Activated CD4-positive, alpha-beta memory T cell treated with anti-CD3 and anti-CD28 coated beads for 36 hours (primary cell): ENCODE measurements at regions of chr14 and their contacts with region 1.

Region 1: GRCh38 chr14:21978184-21978998 is 304.8 kb upstream of the OR4E1 start:
- DNase-seq: peak; percentile 74
- H3K4me3 Mint-ChIP-seq: peak overlapping the region; percentile 72
- H3K27ac Mint-ChIP-seq: peak overlapping the region; percentile 77
- H3K4me1 Mint-ChIP-seq: peaks cover 12% of the 10 kb centered on the region
- H3K27me3 Mint-ChIP-seq: peaks cover 3% of the 10 kb centered on the region

Region 2: GRCh38 chr14:21964180-21964579 is 14.2 kb before region 1 on chr14:
- CTCF ChIA-PET with region 1: interaction called, 15 read pairs
- POLR2A ChIA-PET with region 1: interaction called, 4 read pairs
- intact Hi-C with region 1: no loop called
- DNase-seq: no peak
- H3K4me3 Mint-ChIP-seq: no peak overlapping the region
- H3K27ac Mint-ChIP-seq: peak overlapping the region; percentile 4
- H3K4me1 Mint-ChIP-seq: peaks cover 17% of the 10 kb centered on the region
- H3K27me3 Mint-ChIP-seq: no peaks in the 10 kb centered on the region

Region 3: DNA sequence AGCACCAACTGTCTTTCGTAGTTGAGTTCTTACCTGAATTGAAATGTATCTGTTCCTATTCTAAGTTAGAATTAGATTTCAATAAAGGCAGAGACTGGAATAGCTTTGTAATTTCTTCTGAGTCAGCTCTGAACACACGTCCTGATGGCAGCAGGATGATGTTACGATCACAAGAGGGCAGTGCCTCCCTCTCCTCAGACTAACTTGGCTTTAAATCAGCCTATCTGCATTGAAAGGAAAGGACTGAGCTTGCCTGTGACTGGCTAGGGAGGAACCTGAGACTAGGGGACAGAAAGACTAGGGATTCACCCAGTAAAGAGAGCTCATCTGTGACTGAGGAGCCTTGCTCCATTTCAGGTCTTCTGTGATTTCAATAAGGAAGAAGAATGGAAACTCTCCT is 18.9 kb after region 1 on chr14:
- CTCF ChIA-PET with region 1: interaction called, 71 read pairs
- POLR2A ChIA-PET with region 1: interaction called, 5 read pairs
- intact Hi-C with region 1: no loop called
- DNase-seq: peak; percentile 54
- H3K4me3 Mint-ChIP-seq: peak overlapping the region; percentile 78
- H3K27ac Mint-ChIP-seq: peak overlapping the region; percentile 91
- H3K4me1 Mint-ChIP-seq: peaks cover 11% of the 10 kb centered on the region
- H3K27me3 Mint-ChIP-seq: no peaks in the 10 kb centered on the region

Region 4: GRCh38 chr14:22002860-22003309 is 24.5 kb after region 1 on chr14:
- CTCF ChIA-PET with region 1: interaction called, 14 read pairs
- POLR2A ChIA-PET with region 1: interaction called, 5 read pairs
- intact Hi-C with region 1: no loop called
- DNase-seq: peak; percentile 85
- H3K4me3 Mint-ChIP-seq: peak overlapping the region; percentile 71
- H3K27ac Mint-ChIP-seq: peak overlapping the region; percentile 80
- H3K4me1 Mint-ChIP-seq: peaks cover 19% of the 10 kb centered on the region
- H3K27me3 Mint-ChIP-seq: no peaks in the 10 kb centered on the region

Region 5: GRCh38 chr14:22099942-22100763 is 121.8 kb after region 1 on chr14:
- CTCF ChIA-PET with region 1: interaction called, 4 read pairs
- POLR2A ChIA-PET with region 1: no interaction called
- intact Hi-C with region 1: loop called (anchors 10 kb)
- DNase-seq: peak; percentile 72
- H3K4me3 Mint-ChIP-seq: no peak overlapping the region
- H3K27ac Mint-ChIP-seq: no peak overlapping the region
- H3K4me1 Mint-ChIP-seq: peaks cover 41% of the 10 kb centered on the region
- H3K27me3 Mint-ChIP-seq: no peaks in the 10 kb centered on the region

Region 6: GRCh38 chr14:22226381-22226780 is 248.0 kb after region 1 on chr14:
- CTCF ChIA-PET with region 1: no interaction called
- POLR2A ChIA-PET with region 1: no interaction called
- intact Hi-C with region 1: no loop called
- DNase-seq: peak; percentile 13
- H3K4me3 Mint-ChIP-seq: peak overlapping the region; percentile 51
- H3K27ac Mint-ChIP-seq: peak overlapping the region; percentile 75
- H3K4me1 Mint-ChIP-seq: peaks cover 6% of the 10 kb centered on the region
- H3K27me3 Mint-ChIP-seq: no peaks in the 10 kb centered on the region